ENCODE measurements at regions of chr16 and their contacts with region 1.

Region 1: GRCh38 chr16:58814348-58814801 is 80.3 kb upstream of the GOT2 start:
- DNase-seq: peak; percentile 26
- ATAC-seq: peak; percentile 87
- H3K4me3 Mint-ChIP-seq: peak overlapping the region; percentile 66
- H3K27ac Mint-ChIP-seq: no peak overlapping the region
- H3K4me1 Mint-ChIP-seq: peaks cover 7% of the 10 kb centered on the region; the same call in 1 of the 2 replicates
- H3K27me3 Mint-ChIP-seq: no peaks in the 10 kb centered on the region
- CTCF ChIP-seq: peak; percentile 68; the same call in 1 of the 2 replicates

Region 2: GRCh38 chr16:58843675-58844074 is 29.3 kb after region 1 on chr16:
- CTCF ChIA-PET with region 1: interaction called, 13 read pairs
- POLR2A ChIA-PET with region 1: interaction called, 3 read pairs
- DNase-seq: no peak
- ATAC-seq: no peak
- H3K4me3 Mint-ChIP-seq: no peak overlapping the region
- H3K27ac Mint-ChIP-seq: no peak overlapping the region
- H3K4me1 Mint-ChIP-seq: peaks cover 2% of the 10 kb centered on the region; the same call in 1 of the 2 replicates
- H3K27me3 Mint-ChIP-seq: no peaks in the 10 kb centered on the region
- CTCF ChIP-seq: no peak

Region 3: DNA sequence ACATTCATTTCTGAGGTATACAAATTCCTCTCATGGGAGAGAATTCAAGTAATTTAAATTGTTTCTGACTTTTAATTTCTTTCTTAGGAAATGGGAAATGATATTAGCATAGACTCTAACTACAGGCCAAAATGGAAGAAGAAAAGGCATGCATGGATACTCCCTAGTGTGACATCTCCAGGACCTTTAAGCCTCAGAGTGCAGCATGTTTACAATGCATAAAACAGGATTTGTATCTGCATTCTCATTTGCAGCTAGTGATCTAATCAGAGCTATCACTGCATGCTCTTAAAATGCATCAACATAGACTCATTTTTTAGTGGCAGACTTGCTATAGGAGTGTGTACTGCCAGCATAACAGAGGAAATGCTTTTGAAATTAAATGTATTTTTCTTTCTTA is 144.4 kb after region 1 on chr16:
- CTCF ChIA-PET with region 1: interaction called, 10 read pairs
- POLR2A ChIA-PET with region 1: no interaction called
- DNase-seq: no peak
- ATAC-seq: no peak
- H3K4me3 Mint-ChIP-seq: no peak overlapping the region
- H3K27ac Mint-ChIP-seq: no peak overlapping the region
- H3K4me1 Mint-ChIP-seq: peaks cover 25% of the 10 kb centered on the region
- H3K27me3 Mint-ChIP-seq: no peaks in the 10 kb centered on the region
- CTCF ChIP-seq: no peak

Region 4: GRCh38 chr16:59249011-59249410 is 434.6 kb after region 1 on chr16:
- CTCF ChIA-PET with region 1: interaction called, 22 read pairs
- POLR2A ChIA-PET with region 1: no interaction called
- DNase-seq: peak; percentile 41
- ATAC-seq: peak; percentile 97
- H3K4me3 Mint-ChIP-seq: no peak overlapping the region
- H3K27ac Mint-ChIP-seq: no peak overlapping the region
- H3K4me1 Mint-ChIP-seq: peaks cover 16% of the 10 kb centered on the region
- H3K27me3 Mint-ChIP-seq: no peaks in the 10 kb centered on the region
- CTCF ChIP-seq: no peak